Common myeloid progenitor, CD34-positive (primary cell): ENCODE measurements at regions of chr12 and their contacts with region 1.

Region 1: DNA sequence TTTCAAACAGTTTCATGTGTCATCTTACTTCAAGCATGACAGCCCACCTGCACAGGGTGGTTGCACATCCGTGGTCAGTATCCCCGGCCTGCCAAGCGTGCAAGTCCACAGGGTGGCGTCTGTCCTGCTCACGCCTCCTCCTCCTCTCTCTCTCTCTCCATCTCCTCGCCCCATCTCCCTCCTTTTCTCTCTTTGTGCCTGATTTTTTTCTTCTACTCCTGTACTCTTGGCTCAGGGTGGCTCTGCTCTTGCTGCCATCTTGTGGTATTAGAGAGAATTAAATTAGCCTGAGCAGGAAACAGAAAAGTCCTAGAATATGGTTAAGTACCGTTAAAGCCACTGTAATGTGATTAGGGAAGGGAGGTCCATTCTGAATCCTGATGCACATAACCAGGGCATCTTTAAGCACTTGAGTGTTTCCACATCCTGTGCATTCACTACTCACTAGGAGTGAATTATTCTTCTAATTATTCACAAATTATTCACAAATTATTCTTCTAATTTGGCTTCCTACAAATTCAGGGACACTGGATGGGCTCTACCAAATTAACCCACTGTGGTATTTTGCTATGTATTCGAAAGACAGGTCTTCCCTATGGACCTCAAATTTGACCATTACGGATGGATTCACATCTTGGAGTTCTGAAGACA is 25.5 kb upstream of the DTX1 start:
- DNase-seq: peak; percentile 43 to 67 (median 58)
- H3K4me3 ChIP-seq: no peak overlapping the region
- H3K27ac ChIP-seq: no peak overlapping the region
- H3K4me1 ChIP-seq: no peaks in the 10 kb centered on the region
- H3K27me3 ChIP-seq: no peaks in the 10 kb centered on the region

Region 2: DNA sequence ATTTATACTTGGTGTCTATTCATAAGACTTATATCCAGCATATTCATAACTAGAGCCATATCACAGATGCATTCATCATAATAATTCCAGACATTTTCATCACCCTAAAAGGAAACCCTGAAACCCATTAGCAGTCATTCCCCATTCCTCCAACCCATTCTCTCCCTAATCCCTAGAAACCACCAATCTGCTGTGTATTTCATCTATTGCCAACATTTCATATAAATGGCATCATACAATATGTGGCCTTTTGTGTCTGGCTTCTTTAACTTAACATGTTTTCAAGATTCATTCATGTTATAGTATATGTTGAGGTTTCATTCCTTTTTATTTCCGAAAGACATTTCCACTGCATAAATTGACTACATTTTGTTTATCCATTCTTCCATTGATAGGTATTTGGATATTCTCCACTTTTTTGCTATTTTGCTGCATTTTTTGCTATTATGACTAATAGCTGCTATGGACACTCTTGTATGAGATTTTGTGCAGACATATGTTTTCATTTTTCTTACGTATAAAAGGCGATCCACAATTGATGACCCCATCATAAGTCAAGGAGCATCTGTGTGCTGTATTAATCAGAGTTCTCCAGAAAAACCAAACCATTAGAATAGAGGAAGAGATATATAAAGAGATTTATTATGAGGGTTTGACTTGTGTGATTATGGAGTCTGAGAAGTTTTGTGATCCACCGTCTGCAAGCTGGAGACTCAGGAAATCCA is 57.8 kb before region 1 on chr12:
- CTCF ChIA-PET with region 1: no interaction called
- POLR2A ChIA-PET with region 1: no interaction called
- DNase-seq: no peak
- H3K4me3 ChIP-seq: no peak overlapping the region
- H3K27ac ChIP-seq: no peak overlapping the region
- H3K4me1 ChIP-seq: peaks cover 3 to 36% (median 24%) of the 10 kb centered on the region in 4 experiments
- H3K27me3 ChIP-seq: no peaks in the 10 kb centered on the region

Region 3: GRCh38 chr12:113005754-113006153 is 25.2 kb before region 1 on chr12:
- CTCF ChIA-PET with region 1: interaction called, 10 read pairs
- POLR2A ChIA-PET with region 1: no interaction called
- DNase-seq: peak in 2 of 3 donors; percentile 24 to 32
- H3K4me3 ChIP-seq: peak overlapping the region in 1 of 7 experiments; percentile 1
- H3K27ac ChIP-seq: no peak overlapping the region
- H3K4me1 ChIP-seq: no peaks in the 10 kb centered on the region
- H3K27me3 ChIP-seq: no peaks in the 10 kb centered on the region